ENCODE measurements at regions of chr5 and their contacts with region 1.

Region 1: DNA sequence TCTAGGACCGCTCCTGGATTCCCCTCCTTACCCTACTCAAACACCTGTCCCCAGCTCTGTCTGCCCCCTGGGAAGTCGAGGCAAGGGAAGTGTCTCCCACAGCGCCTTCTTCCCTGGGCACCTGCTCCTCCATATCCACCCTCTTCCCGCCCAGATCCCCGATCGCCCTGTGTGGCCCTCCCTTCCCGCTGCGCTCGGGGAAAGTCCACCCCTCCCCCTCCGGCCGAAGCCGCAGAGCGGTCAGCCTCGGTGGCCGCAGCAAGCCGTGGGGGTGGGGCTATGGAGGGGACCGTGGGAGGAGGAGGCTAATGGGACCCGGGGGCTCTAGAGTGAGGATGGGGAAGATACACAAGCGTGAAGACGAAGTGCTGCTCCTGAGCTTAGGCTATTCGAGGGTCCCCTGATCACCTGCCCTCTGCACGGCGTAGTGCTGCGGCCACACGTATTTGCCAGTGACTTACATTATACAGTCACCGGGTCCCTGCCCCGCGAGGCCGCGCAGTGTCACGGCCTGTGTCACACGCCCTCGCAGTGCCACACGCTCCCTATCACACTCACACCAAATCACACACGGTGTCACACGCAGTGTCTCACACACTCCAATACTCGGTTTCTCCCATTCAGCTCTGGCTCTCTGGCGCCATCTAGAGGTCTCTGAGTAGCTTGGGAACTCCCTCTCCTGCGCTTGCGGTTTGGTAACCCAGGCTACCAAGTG is 658 bp upstream of the PCDH1 start:
- DNase-seq: peak; percentile 100
- H3K4me3 Mint-ChIP-seq: peak overlapping the region; percentile 80
- H3K27ac Mint-ChIP-seq: no peak overlapping the region
- H3K4me1 Mint-ChIP-seq: peaks cover 30% of the 10 kb centered on the region
- H3K27me3 Mint-ChIP-seq: peaks cover 55% of the 10 kb centered on the region
- CTCF ChIP-seq: peak; percentile 99

Region 2: GRCh38 chr5:141636413-141637122 is 242.3 kb before region 1 on chr5 and contains the starts of genes HDAC3 and RELL2:
- CTCF ChIA-PET with region 1: interaction called, 4 read pairs
- POLR2A ChIA-PET with region 1: interaction called, 11 read pairs
- intact Hi-C with region 1: no loop called
- DNase-seq: peak; percentile 95
- H3K4me3 Mint-ChIP-seq: peak within 1 kb of the TSS; percentile 92
- H3K27ac Mint-ChIP-seq: peak within 1 kb of the TSS; percentile 47
- H3K4me1 Mint-ChIP-seq: peaks cover 42% of the 10 kb centered on the region
- H3K27me3 Mint-ChIP-seq: no peaks in the 10 kb centered on the region
- CTCF ChIP-seq: no peak
- total RNA-seq, gene HDAC3: 83.5 and 85.6 TPM in 2 replicates
- total RNA-seq, gene RELL2: 12.5 and 13.3 TPM in 2 replicates

Region 3: DNA sequence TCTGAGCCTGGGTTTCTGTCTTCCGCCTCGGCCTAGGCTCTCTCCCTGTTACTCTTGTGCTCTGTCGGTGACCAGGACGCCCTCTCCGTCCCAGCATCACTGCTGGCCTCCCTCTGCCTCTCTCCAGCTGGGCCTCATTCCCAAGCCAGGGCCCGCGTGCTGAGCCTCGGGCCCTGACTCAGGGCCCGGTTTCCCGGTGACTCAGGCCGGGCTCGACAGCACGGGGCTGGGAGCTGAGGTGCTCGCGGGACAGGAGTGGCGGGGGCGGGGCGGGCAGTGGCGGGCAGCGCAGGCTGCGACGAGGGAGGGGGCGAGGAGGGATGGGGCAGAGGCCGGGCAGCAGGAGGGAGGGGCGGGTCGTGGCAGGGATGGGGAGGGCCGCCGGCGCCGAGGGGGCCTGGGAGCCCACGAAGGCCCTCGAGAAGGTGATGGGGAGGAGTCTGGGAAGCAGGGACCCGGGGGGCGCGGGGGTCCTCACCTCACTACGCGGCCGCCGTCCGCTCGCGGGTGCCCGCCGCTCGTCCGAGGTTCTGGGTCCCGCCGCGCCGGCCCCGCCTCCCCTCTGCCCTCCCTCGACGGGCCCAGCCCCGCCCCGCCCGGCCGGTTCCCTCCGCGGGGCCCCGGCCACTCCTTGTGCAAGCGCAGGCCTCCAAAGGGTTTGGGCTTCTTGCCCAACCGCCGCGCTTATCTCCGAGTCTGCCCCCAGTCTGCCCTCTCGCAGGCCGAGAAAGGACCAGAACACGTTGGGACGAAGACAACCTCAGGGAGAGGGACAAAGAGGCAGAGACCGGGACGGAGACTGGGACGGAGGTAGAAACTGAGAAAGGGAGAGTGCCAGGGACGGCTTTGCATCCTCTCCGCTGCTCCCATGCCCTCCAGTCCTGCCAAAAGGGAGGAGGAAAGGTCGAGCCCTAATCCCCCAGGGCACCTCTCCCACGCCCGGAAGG is 196.9 kb before region 1 on chr5 and contains the start of gene ARAP3:
- CTCF ChIA-PET with region 1: interaction called, 41 read pairs
- POLR2A ChIA-PET with region 1: interaction called, 5 read pairs
- intact Hi-C with region 1: no loop called
- DNase-seq: peak; percentile 93
- H3K4me3 Mint-ChIP-seq: peak within 1 kb of the TSS; percentile 76
- H3K27ac Mint-ChIP-seq: peak within 1 kb of the TSS; percentile 93
- H3K4me1 Mint-ChIP-seq: peaks cover 14% of the 10 kb centered on the region
- H3K27me3 Mint-ChIP-seq: no peaks in the 10 kb centered on the region
- CTCF ChIP-seq: no peak
- total RNA-seq, gene ARAP3: 19.8 and 22.8 TPM in 2 replicates

Region 4: DNA sequence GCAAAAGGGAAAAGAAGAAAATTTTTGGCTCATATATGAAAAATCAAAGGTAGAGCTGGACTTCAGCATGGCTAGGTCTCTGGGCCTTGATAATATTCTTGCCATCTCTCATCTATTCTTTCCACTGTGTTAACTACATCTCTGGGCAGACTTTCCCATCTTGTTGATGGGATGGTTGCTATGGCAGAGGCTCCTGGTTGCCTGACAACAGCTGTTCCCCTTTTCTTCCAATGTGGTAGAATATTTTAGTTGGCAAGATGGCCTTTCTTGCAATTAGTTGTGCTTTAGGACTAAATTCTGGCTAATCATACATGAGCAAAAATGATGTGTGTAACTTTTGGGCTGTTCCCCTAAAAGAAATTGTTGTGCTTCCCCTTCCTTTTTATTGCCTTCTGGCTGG is 156.6 kb before region 1 on chr5:
- CTCF ChIA-PET with region 1: interaction called, 20 read pairs
- POLR2A ChIA-PET with region 1: no interaction called
- intact Hi-C with region 1: no loop called
- DNase-seq: no peak
- H3K4me3 Mint-ChIP-seq: no peak overlapping the region
- H3K27ac Mint-ChIP-seq: no peak overlapping the region
- H3K4me1 Mint-ChIP-seq: no peaks in the 10 kb centered on the region
- H3K27me3 Mint-ChIP-seq: no peaks in the 10 kb centered on the region
- CTCF ChIP-seq: no peak

Region 5: DNA sequence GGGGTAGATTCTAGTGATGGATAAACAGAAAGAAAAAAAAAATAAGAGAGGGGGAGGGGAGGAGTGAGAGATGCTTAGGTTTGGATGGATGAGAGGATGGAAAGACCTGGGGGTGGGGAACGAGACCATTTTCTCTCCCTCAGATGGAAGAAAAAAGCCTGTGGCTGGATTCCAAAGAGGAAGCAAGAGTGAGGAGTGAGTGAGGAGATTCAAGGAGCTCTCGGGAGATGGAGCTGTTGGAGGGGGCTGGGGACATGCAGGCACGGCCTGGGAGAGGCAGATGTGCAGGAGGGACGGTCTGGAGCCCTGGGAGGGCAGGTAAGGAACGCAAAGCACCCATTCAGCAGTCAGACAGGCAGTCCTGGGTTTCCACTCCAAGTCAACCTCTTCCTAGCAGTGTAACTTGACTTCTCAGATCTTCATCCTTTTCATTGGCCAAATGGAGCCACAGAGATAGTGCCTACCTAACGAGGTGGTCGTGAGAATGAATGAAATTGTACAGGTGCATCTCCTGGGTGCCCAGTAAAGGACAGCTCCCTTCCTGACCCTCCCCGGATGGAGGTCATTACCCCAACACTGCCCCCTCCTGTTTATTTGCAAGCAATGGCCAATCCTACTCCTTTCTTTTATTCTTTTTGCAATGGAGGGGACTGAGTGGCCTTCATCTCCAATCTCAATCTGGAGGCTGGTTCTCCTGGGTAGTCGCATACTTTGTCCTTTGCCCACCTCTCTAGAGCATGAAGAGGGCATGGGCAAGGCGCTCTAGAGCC is 52.9 kb before region 1 on chr5:
- CTCF ChIA-PET with region 1: interaction called, 10 read pairs
- POLR2A ChIA-PET with region 1: interaction called, 5 read pairs
- intact Hi-C with region 1: no loop called
- DNase-seq: peak; percentile 56
- H3K4me3 Mint-ChIP-seq: no peak overlapping the region
- H3K27ac Mint-ChIP-seq: no peak overlapping the region
- H3K4me1 Mint-ChIP-seq: peaks cover 13% of the 10 kb centered on the region
- H3K27me3 Mint-ChIP-seq: no peaks in the 10 kb centered on the region
- CTCF ChIP-seq: peak; percentile 32

Region 6: DNA sequence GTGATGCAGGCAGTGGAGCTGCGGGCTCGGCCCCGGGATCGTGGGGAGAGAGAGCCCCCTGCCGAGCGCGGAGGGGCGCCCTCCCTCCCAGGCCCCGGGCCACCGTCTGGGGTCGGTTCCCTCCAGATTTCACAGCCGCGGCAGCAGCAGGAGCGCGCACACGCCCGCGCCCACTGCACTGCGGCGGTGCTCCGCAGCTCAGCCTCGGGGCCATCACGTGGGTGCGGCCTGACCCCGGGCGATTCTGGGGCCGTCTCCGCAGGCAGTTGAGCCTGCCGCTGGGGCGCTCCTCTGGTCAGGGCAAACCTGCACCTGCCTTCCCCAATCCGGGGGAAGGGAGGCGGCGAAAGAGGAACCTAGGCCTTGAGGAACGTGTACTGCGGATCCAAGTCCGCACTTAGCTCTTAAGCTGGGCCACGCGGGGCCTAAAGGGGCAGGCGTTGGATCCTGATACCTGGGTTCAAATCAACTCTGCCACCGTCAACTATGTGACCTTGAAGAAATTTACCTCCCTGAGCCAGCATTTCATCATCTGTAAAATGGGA is 35.4 kb after region 1 on chr5:
- CTCF ChIA-PET with region 1: interaction called, 10 read pairs
- POLR2A ChIA-PET with region 1: interaction called, 3 read pairs
- intact Hi-C with region 1: no loop called
- DNase-seq: no peak
- H3K4me3 Mint-ChIP-seq: no peak overlapping the region
- H3K27ac Mint-ChIP-seq: no peak overlapping the region
- H3K4me1 Mint-ChIP-seq: peaks cover 14% of the 10 kb centered on the region
- H3K27me3 Mint-ChIP-seq: peaks cover 16% of the 10 kb centered on the region
- CTCF ChIP-seq: no peak

Region 7: GRCh38 chr5:141968914-141969608 is 90.2 kb after region 1 on chr5 and contains the start of gene RNF14:
- CTCF ChIA-PET with region 1: interaction called, 519 read pairs
- POLR2A ChIA-PET with region 1: interaction called, 7 read pairs
- intact Hi-C with region 1: no loop called
- DNase-seq: peak; percentile 97
- H3K4me3 Mint-ChIP-seq: peak within 1 kb of the TSS; percentile 88
- H3K27ac Mint-ChIP-seq: peak within 1 kb of the TSS; percentile 99
- H3K4me1 Mint-ChIP-seq: peaks cover 24% of the 10 kb centered on the region
- H3K27me3 Mint-ChIP-seq: no peaks in the 10 kb centered on the region
- CTCF ChIP-seq: peak; percentile 100
- total RNA-seq, gene RNF14: 78.0 and 81.3 TPM in 2 replicates

Region 8: DNA sequence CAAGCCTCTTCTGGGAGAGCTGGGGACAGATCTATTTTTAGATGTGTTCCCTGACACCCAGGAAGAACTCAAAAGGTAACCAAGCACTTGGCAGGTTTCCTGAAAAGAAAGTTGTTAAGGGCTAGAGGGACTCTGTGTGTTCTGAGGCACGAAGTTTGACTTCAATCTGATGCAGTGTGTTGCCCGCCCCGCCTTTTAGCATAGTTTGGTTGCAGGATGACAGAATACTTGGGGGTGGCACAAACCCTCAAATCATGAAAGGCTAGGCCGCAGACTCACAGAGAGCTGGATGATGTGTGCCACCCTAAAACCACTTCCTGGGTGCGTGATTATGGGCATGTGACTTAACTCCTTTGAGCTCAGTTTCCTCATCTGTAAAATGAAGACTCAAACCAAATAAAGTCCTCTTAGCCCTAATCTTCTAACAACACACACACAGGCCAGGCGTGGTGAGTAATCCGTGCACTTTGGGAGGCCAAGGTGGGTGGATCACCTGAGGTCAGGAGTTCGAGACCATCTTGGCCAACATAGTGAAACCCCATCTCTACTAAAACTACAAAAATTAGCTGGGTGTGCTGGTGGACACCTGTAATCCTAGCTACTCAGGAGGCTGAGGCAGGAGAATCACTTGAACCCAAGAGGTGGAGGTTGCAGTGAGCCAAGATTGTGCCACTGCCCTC is 216.9 kb after region 1 on chr5:
- CTCF ChIA-PET with region 1: no interaction called
- POLR2A ChIA-PET with region 1: no interaction called
- intact Hi-C with region 1: no loop called
- DNase-seq: no peak
- H3K4me3 Mint-ChIP-seq: no peak overlapping the region
- H3K27ac Mint-ChIP-seq: no peak overlapping the region
- H3K4me1 Mint-ChIP-seq: peaks cover 20% of the 10 kb centered on the region
- H3K27me3 Mint-ChIP-seq: no peaks in the 10 kb centered on the region
- CTCF ChIP-seq: no peak